Ascending aorta (tissue), 2 donors: ENCODE measurements at regions of chr12 and their contacts with region 1.

Region 1: GRCh38 chr12:26239122-26239851 is 43.9 kb downstream of the SSPN start:
- DNase-seq: peak; percentile 52 to 88
- H3K4me3 ChIP-seq: no peak overlapping the region
- H3K27ac ChIP-seq: peak overlapping the region; percentile 62 to 75
- H3K4me1 ChIP-seq: no peaks in the 10 kb centered on the region
- H3K27me3 ChIP-seq: no peaks in the 10 kb centered on the region
- CTCF ChIP-seq: no peak

Region 2: DNA sequence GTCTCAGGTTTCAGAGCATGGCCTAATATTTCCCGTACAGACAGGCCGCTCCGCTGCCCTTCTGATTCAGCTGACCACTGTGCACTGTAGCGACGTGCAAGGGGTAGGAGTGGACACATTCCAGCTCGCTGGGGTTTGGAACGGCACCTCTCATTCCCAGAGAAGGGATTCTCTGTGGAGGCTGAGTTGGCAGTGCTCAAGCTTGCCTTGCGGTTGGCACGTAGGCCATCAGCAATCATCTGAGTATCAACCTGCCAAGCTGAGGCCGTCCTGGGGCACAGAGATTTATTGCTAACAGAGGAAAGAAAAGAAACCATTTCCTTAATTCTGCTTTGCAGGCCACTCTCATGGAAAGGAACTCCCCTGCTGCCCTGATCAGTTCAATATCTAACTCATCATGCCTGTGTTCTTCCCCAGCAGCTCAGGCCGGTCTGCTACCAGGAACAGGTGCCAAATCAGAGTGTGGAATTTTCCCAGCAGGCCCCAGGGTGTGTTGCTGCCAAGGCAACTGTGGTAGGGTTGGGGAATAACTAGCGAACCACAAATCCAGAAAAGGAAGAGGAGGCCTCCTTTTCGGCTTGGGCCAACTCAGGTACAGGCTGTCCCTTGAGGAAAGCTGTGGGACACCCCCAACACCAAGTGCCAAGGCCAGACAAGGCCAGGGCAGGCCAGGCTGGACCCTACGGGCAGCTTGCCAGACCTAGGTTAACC is 48.5 kb after region 1 on chr12:
- intact Hi-C with region 1: loop called (anchors 5 kb)
- DNase-seq: peak in 1 of 2 donors; percentile 77
- H3K4me3 ChIP-seq: peak overlapping the region in 1 of 2 donors; percentile 17
- H3K27ac ChIP-seq: peak overlapping the region; percentile 87 to 93
- H3K4me1 ChIP-seq: peaks cover 7 to 15% of the 10 kb centered on the region in 2 donors
- H3K27me3 ChIP-seq: no peaks in the 10 kb centered on the region
- CTCF ChIP-seq: no peak

Region 3: GRCh38 chr12:26298785-26299621 is 59.7 kb after region 1 on chr12:
- intact Hi-C with region 1: loop called (anchors 1 kb)
- DNase-seq: no peak
- H3K4me3 ChIP-seq: peak overlapping the region; percentile 23 to 50
- H3K27ac ChIP-seq: peak overlapping the region; percentile 75 to 79
- H3K4me1 ChIP-seq: peaks cover 0 to 11% of the 10 kb centered on the region in 2 donors
- H3K27me3 ChIP-seq: no peaks in the 10 kb centered on the region
- CTCF ChIP-seq: peak in 2 of 3 experiments; percentile 23 to 34

Region 4: DNA sequence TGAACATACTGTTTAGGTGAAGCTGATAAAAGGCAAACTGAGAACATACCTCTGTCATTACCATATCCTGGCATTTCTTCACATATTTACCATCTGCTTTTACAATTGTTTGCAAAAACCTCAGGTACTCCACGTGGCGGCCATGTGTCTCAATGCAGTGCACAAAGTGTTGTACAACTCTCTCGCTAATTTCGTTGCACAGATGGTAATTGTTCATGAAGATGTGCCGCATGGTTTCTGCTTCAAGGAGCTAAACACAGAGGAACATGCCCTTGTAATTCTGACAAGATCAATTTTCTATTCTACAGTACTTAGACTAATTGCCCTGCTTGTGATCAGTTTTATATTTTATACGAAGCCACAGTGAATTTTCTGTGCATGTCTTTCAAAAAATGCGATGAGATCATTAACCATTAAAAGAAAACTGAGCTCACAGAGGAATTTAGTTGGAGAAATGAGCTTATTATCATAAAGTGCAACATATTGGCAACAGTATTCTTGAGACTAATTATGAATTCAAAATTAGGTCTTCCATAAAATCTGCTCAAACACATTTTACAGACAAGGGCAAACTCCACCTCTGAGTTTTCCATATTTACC is 359.9 kb after region 1 on chr12:
- intact Hi-C with region 1: no loop called
- DNase-seq: no peak
- H3K4me3 ChIP-seq: no peak overlapping the region
- H3K27ac ChIP-seq: no peak overlapping the region
- H3K4me1 ChIP-seq: no peaks in the 10 kb centered on the region
- H3K27me3 ChIP-seq: no peaks in the 10 kb centered on the region
- CTCF ChIP-seq: no peak